ENCODE measurements at regions of chr5 and their contacts with region 1.

Region 1: GRCh38 chr5:108642167-108642906 is 105.4 kb upstream of the FER start:
- DNase-seq: peak; percentile 79
- H3K4me3 ChIP-seq: peak overlapping the region; percentile 19; the same call in 1 of the 2 replicates
- H3K4me3 Mint-ChIP-seq: peak overlapping the region; percentile 52
- H3K27ac Mint-ChIP-seq: peak overlapping the region; percentile 3
- H3K4me1 ChIP-seq: no peaks in the 10 kb centered on the region
- H3K4me1 Mint-ChIP-seq: peaks cover 11% of the 10 kb centered on the region
- H3K27me3 ChIP-seq: no peaks in the 10 kb centered on the region
- H3K27me3 Mint-ChIP-seq: no peaks in the 10 kb centered on the region
- CTCF ChIP-seq: peak; percentile 88 to 94

Region 2: GRCh38 chr5:108481355-108481931 is 160.9 kb before region 1 on chr5:
- CTCF ChIA-PET with region 1: no interaction called
- POLR2A ChIA-PET with region 1: no interaction called
- intact Hi-C with region 1: loop called (anchors 1 kb)
- DNase-seq: peak; percentile 35 to 51
- H3K4me3 ChIP-seq: no peak overlapping the region
- H3K4me3 Mint-ChIP-seq: no peak overlapping the region
- H3K27ac Mint-ChIP-seq: no peak overlapping the region
- H3K4me1 ChIP-seq: no peaks in the 10 kb centered on the region
- H3K4me1 Mint-ChIP-seq: no peaks in the 10 kb centered on the region
- H3K27me3 ChIP-seq: no peaks in the 10 kb centered on the region
- H3K27me3 Mint-ChIP-seq: peaks cover 10% of the 10 kb centered on the region
- CTCF ChIP-seq: peak; percentile 44 to 51

Region 3: GRCh38 chr5:108681079-108681921 is 39.0 kb after region 1 on chr5:
- CTCF ChIA-PET with region 1: no interaction called
- POLR2A ChIA-PET with region 1: no interaction called
- intact Hi-C with region 1: loop called (anchors 5 kb)
- DNase-seq: peak; percentile 46 to 66
- H3K4me3 ChIP-seq: no peak overlapping the region
- H3K4me3 Mint-ChIP-seq: no peak overlapping the region
- H3K27ac Mint-ChIP-seq: no peak overlapping the region
- H3K4me1 ChIP-seq: peaks cover 7% of the 10 kb centered on the region
- H3K4me1 Mint-ChIP-seq: peaks cover 9% of the 10 kb centered on the region
- H3K27me3 ChIP-seq: no peaks in the 10 kb centered on the region
- H3K27me3 Mint-ChIP-seq: peaks cover 3% of the 10 kb centered on the region
- CTCF ChIP-seq: peak; percentile 73 to 91

Region 4: GRCh38 chr5:108919591-108920326 is 277.4 kb after region 1 on chr5:
- CTCF ChIA-PET with region 1: interaction called, 3 read pairs
- POLR2A ChIA-PET with region 1: no interaction called
- intact Hi-C with region 1: loop called (anchors 1 kb)
- DNase-seq: no peak
- H3K4me3 ChIP-seq: no peak overlapping the region
- H3K4me3 Mint-ChIP-seq: no peak overlapping the region
- H3K27ac Mint-ChIP-seq: no peak overlapping the region
- H3K4me1 ChIP-seq: peaks cover 8% of the 10 kb centered on the region; the same call in 1 of the 2 replicates
- H3K4me1 Mint-ChIP-seq: peaks cover 16% of the 10 kb centered on the region
- H3K27me3 ChIP-seq: no peaks in the 10 kb centered on the region
- H3K27me3 Mint-ChIP-seq: no peaks in the 10 kb centered on the region
- CTCF ChIP-seq: peak; percentile 18 to 42

Region 5: GRCh38 chr5:109468737-109469420 is 826.5 kb after region 1 on chr5:
- CTCF ChIA-PET with region 1: no interaction called
- POLR2A ChIA-PET with region 1: no interaction called
- intact Hi-C with region 1: loop called (anchors 2 kb)
- DNase-seq: peak; percentile 77 to 87
- H3K4me3 ChIP-seq: no peak overlapping the region
- H3K4me3 Mint-ChIP-seq: no peak overlapping the region
- H3K27ac Mint-ChIP-seq: no peak overlapping the region
- H3K4me1 ChIP-seq: no peaks in the 10 kb centered on the region
- H3K4me1 Mint-ChIP-seq: no peaks in the 10 kb centered on the region
- H3K27me3 ChIP-seq: no peaks in the 10 kb centered on the region
- H3K27me3 Mint-ChIP-seq: peaks cover 3% of the 10 kb centered on the region
- CTCF ChIP-seq: peak; percentile 66 to 78

Measured in Caco-2 (cell line).